ENCODE measurements at regions of chr20 and their contacts with region 1.

Region 1: GRCh38 chr20:10536531-10536930 is 101.4 kb downstream of the SLX4IP start:
- DNase-seq: peak; percentile 42
- H3K4me3 Mint-ChIP-seq: no peak overlapping the region
- H3K27ac Mint-ChIP-seq: no peak overlapping the region
- H3K4me1 Mint-ChIP-seq: peaks cover 10% of the 10 kb centered on the region
- H3K27me3 Mint-ChIP-seq: no peaks in the 10 kb centered on the region

Region 2: GRCh38 chr20:10469599-10469998 is 66.9 kb before region 1 on chr20:
- CTCF ChIA-PET with region 1: interaction called, 3 read pairs
- POLR2A ChIA-PET with region 1: no interaction called
- intact Hi-C with region 1: loop called (anchors 1 kb)
- DNase-seq: no peak
- H3K4me3 Mint-ChIP-seq: no peak overlapping the region
- H3K27ac Mint-ChIP-seq: no peak overlapping the region
- H3K4me1 Mint-ChIP-seq: peaks cover 10% of the 10 kb centered on the region
- H3K27me3 Mint-ChIP-seq: no peaks in the 10 kb centered on the region

Region 3: DNA sequence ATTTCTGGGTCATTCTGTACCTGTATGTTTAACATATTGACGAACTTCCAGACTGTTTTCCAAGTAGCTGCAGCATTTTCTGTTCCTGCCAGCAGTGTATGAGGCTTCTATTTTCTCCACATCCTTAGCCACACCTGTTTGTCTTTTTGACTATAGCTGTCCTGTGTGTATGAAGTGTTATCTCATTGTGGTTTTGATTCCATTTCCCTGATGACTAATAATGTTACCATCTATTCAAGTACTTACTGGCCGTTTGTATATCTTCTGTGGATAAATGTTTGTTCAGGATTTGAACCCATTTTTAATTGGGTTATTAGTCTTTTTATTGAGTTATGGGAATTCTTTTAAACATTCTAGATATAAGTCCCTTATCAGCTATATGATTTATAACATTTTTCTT is 42.1 kb after region 1 on chr20:
- CTCF ChIA-PET with region 1: no interaction called
- POLR2A ChIA-PET with region 1: no interaction called
- intact Hi-C with region 1: no loop called
- DNase-seq: no peak
- H3K4me3 Mint-ChIP-seq: no peak overlapping the region
- H3K27ac Mint-ChIP-seq: no peak overlapping the region
- H3K4me1 Mint-ChIP-seq: peaks cover 5% of the 10 kb centered on the region
- H3K27me3 Mint-ChIP-seq: no peaks in the 10 kb centered on the region

Measured in activated CD4-positive, alpha-beta memory T cell treated with anti-CD3 and anti-CD28 coated beads for 36 hours (primary cell).